ENCODE measurements at regions of chr20 and their contacts with region 1.

Region 1: DNA sequence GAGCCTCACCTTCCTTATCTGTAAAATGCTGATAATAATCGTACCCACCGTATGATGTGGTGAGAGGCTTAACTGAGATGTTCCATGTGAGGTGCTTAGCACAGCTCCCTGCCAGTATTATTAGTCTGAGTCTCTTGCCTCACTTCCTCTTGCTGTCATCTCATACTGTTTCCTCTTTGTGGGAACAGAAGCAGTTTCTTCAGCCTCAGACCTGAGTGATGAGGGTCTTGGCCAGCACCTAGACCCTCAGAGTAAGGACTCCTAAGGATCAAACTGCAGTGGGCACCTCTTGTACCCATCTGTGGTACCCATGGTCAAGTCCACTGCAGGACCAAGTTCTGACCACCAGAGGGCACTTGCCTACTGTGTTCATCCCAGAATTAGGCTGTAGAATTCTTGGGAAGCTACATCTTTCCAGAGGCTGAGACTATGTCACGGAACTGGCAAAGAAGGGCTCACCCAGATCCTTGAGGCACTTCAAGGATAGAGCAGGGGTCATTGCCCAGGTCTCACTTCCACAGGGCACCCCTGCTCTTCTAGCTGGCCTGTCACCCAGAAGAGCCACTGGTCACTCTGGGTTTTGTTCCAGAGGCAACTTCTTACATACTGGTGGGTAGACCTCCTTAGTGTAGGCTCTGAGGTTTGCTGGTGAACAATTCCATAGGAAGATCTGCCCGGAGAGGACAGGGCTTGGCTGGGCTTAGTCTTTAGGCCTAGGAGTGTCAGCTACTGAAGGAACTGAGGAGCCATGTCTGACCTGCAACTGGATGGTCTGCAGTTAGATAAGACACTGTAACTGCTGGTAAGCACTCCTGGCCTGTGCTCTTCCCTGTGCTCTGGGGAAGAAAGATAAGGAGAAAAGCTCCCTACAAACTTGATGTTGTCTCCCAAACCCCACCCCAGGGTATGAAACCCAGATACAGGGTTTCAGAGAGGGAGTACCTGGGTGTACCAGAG is 20.6 kb upstream of the SGK2 start:
- DNase-seq: peak; percentile 61 to 63
- ATAC-seq: peak; percentile 47 to 68 (median 65)
- H3K4me3 ChIP-seq: no peak overlapping the region
- H3K27ac ChIP-seq: no peak overlapping the region
- H3K4me1 ChIP-seq: peaks cover 0 to 8% (median 0%) of the 10 kb centered on the region in 9 donors
- H3K27me3 ChIP-seq: no peaks in the 10 kb centered on the region
- CTCF ChIP-seq: peak; percentile 83 to 92 (median 89)

Region 2: DNA sequence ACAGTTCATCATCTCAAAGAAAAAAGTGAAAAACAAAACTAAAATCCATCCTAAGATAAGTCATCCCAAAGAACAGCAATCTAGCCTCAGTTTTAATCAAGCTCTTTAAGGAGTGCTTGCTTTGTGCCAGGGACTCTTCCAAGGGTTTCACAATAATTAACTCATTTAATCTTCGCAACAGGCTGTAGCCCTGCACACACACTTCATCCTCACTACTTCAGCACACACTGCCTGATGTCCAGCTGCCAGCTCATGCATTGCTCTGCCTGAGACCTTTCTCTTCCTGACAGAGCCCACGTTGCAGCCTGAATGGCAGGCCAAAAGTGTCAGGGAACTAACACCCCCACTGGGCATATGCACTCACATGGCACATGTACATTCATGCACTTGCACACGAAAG is 327.3 kb before region 1 on chr20:
- intact Hi-C with region 1: no loop called
- DNase-seq: no peak
- ATAC-seq: no peak
- H3K4me3 ChIP-seq: no peak overlapping the region
- H3K27ac ChIP-seq: no peak overlapping the region
- H3K4me1 ChIP-seq: no peaks in the 10 kb centered on the region
- H3K27me3 ChIP-seq: peaks cover 0 to 13% (median 1%) of the 10 kb centered on the region in 7 donors
- CTCF ChIP-seq: no peak

Region 3: DNA sequence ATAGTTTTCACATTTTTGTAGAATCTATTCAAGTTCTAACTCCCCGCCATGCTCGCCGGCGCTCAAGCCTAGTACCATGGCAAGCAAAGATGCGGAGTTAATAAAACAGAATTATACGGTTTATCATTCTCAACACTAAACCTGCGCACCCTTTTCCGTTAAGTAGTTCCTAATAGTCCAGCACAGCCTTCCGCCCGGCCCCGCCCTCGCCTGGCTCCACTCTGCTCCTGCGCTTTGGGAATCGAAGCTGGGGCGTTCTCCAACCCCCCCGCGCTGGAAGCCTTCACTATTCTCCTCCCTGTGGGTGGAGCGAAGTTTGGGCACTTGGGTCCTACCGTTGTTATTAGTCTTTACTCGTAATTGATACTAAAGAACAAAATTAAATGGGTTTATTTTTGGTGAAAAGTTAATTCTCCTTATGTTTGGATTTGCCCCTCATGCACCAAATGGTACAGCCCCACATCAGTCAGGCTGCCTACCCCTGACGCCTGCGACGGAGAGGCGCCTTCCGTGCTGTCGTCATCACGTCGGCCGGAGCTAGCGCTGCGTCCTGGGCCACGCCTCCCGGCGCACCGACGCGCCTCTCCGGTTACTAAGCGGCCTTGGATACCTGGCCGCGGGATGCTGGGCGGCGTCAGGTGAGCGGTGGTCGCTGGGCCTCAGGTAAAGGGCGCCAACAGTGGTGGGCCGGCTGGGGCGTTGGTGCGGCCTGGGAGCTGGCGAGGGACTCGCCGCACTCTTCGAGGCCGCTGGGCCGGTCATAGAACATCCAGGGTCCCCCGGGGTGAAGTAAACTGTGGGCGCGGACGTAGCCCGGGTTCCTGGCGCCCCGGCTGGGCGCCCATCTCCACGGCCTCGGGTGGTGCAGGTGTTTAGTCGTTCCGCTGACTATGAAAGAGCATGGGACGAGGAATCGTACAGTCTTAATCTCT is 52.5 kb after region 1 on chr20 and contains the start of gene IFT52:
- intact Hi-C with region 1: loop called in 1 of 10 experiments (anchors 5 kb)
- DNase-seq: peak; percentile 92 to 96
- ATAC-seq: peak; percentile 99 to 100 (median 99)
- H3K4me3 ChIP-seq: peak within 1 kb of the TSS; percentile 60 to 97 (median 90)
- H3K27ac ChIP-seq: peak within 1 kb of the TSS; percentile 44 to 92 (median 86)
- H3K4me1 ChIP-seq: peaks cover 0 to 20% (median 13%) of the 10 kb centered on the region in 9 donors
- H3K27me3 ChIP-seq: no peaks in the 10 kb centered on the region
- CTCF ChIP-seq: peak in 3 of 9 donors; percentile 5 to 13 (median 6)
- total RNA-seq, gene IFT52: 5.2 to 8.0 (median 6.8) TPM

Region 4: GRCh38 chr20:43681468-43681942 is 143.3 kb after region 1 on chr20:
- intact Hi-C with region 1: loop called in 1 of 10 experiments (anchors 10 kb)
- DNase-seq: peak in 1 of 2 donors; percentile 33
- ATAC-seq: peak in 7 of 8 donors; percentile 25 to 94 (median 78)
- H3K4me3 ChIP-seq: peak overlapping the region in 1 of 10 donors; percentile 10
- H3K27ac ChIP-seq: no peak overlapping the region
- H3K4me1 ChIP-seq: peaks cover 0 to 6% (median 0%) of the 10 kb centered on the region in 9 donors
- H3K27me3 ChIP-seq: peaks cover 0 to 3% (median 0%) of the 10 kb centered on the region in 7 donors
- CTCF ChIP-seq: peak in 3 of 9 donors; percentile 7 to 28 (median 16)

Region 5: GRCh38 chr20:43691928-43692524 is 153.8 kb after region 1 on chr20:
- intact Hi-C with region 1: loop called in 2 of 10 experiments (anchors 10 kb)
- DNase-seq: no peak
- ATAC-seq: no peak
- H3K4me3 ChIP-seq: no peak overlapping the region
- H3K27ac ChIP-seq: no peak overlapping the region
- H3K4me1 ChIP-seq: no peaks in the 10 kb centered on the region
- H3K27me3 ChIP-seq: no peaks in the 10 kb centered on the region
- CTCF ChIP-seq: peak in 7 of 9 donors; percentile 33 to 62 (median 41)